ENCODE measurements at regions of chr16 and their contacts with region 1.

Region 1: DNA sequence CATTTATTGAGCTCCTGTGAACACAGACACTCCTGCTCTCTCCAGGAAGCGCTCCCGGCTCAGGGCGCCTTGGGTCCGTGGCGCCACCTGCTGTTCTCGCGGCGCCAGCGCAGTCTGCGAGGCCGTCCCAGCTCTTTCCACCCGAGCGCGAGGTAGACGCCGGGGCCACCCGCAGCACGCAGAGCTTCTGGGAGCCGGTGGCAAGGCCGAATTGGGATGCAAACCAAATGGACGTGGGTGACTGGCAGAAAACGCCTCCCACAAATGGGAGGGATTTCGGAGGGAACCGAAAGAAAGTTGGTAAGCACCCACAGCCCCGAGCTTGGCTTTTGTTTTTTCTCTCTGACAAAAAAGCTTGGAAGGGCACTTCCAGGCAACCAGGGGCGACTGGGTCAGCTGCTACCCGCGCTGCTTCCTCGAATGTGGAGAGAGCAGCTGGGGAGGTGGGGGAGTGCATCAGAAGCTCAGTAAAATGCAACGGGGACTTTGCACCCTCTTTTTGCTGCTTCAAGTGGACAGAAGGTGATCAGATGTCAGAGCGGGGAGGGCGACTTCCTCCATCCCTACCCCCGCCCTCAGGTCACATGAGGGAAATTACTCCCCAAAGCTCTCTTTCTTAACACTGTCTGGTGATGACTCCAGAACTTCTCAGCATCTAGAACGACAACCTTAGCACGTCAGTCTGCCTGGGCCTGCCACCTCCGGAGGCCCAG is 13.5 kb upstream of the N4BP1 start:
- H3K4me3 Mint-ChIP-seq: peak overlapping the region; percentile 95
- H3K27ac Mint-ChIP-seq: no peak overlapping the region
- H3K4me1 Mint-ChIP-seq: peaks cover 76% of the 10 kb centered on the region
- H3K27me3 Mint-ChIP-seq: no peaks in the 10 kb centered on the region

Region 2: DNA sequence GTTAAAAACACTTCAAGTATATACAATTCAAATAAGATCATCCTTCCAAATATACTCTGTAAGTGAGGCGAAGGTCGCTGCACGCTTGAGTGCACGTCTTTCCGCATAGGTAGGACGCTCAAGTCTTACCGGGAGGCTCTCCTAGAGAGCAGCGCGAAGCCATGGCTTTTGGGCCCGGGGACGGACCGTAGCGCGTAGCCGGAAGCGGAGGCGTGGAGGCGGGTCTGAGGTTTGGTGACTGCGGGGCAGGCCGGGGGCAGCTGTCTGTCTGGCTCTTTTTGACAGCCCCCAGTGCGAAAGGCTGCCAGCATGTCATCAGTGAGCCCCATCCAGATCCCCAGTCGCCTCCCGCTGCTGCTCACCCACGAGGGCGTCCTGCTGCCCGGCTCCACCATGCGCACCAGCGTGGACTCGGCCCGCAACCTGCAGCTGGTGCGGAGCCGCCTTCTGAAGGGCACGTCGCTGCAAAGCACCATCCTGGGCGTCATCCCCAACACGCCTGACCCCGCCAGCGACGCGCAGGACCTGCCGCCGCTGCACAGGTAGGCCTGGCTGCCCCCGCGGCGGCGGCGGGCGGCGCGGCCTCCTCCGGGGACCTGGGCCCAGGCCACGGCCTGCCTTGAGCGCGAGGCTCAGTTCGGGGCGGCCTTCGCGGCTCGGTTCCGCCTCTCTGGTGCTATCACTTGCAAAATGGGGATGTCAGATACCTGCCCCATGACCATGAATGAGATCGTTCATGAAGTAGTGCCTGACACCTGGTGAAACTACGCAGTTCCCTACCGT is 379.2 kb before region 1 on chr16 and contains the start of gene LONP2:
- intact Hi-C with region 1: loop called (anchors 2 kb)
- H3K4me3 Mint-ChIP-seq: peak within 1 kb of the TSS; percentile 99
- H3K27ac Mint-ChIP-seq: peak within 1 kb of the TSS; percentile 93
- H3K4me1 Mint-ChIP-seq: peaks cover 26% of the 10 kb centered on the region
- H3K27me3 Mint-ChIP-seq: no peaks in the 10 kb centered on the region

Region 3: DNA sequence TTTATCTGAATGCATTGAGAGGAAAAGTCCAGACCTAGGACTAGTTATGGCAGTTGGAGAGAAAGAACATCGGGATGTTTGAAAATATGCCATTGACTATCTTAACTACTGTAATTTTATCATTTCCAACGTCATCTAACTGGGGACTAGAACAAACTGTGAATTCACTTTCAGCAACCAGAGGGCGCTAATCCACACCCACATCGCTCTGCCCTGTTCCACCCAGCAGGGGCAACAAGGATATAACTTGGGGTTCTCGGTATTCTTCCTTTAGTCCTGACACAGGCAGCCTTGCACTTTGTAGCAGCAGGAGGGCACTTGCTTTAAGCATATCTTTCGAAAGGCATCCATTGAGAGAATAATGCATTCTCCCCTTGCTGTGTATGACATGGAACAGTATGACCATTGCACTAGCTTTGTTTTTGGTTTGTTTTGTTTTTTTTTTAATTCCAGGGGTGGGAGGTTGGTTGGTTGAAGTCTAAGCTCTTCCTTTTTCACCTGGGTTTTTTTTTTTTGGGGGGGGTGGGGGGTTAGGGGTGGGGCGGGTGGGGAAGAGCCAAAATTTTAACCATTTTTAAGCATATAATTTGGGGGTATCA is 269.8 kb before region 1 on chr16:
- intact Hi-C with region 1: loop called (anchors 2 kb)
- H3K4me3 Mint-ChIP-seq: no peak overlapping the region
- H3K27ac Mint-ChIP-seq: peak overlapping the region; percentile 59
- H3K4me1 Mint-ChIP-seq: peaks cover 30% of the 10 kb centered on the region
- H3K27me3 Mint-ChIP-seq: no peaks in the 10 kb centered on the region

Region 4: GRCh38 chr16:48556913-48557351 is 66.5 kb before region 1 on chr16:
- intact Hi-C with region 1: loop called (anchors 2 kb)
- H3K4me3 Mint-ChIP-seq: peak overlapping the region; percentile 9
- H3K27ac Mint-ChIP-seq: peak overlapping the region; percentile 66
- H3K4me1 Mint-ChIP-seq: peaks cover 86% of the 10 kb centered on the region
- H3K27me3 Mint-ChIP-seq: no peaks in the 10 kb centered on the region

Region 5: GRCh38 chr16:48609652-48610029 is 13.8 kb before region 1 on chr16:
- intact Hi-C with region 1: loop called (anchors 1 kb)
- H3K4me3 Mint-ChIP-seq: no peak overlapping the region
- H3K27ac Mint-ChIP-seq: no peak overlapping the region
- H3K4me1 Mint-ChIP-seq: peaks cover 50% of the 10 kb centered on the region
- H3K27me3 Mint-ChIP-seq: no peaks in the 10 kb centered on the region

Region 6: DNA sequence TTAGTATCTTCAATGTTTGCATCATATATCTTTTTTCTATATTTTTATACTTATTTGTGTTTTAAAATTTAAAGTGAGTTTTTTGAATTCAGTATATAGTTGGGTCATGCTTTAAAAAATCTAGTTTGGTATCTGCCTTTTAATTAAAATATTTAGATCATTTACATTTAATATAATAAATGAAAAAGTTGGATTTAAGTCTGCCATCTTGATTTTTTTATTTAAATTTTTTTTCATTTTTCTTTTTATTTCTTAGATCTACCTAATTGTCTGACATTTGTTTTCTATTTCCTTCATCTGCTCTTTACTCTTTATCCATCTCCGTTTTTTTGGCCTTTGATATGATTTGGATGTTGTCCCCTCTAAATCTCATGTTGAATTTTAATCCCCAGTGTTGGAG is 36.5 kb after region 1 on chr16:
- intact Hi-C with region 1: no loop called
- H3K4me3 Mint-ChIP-seq: no peak overlapping the region
- H3K27ac Mint-ChIP-seq: no peak overlapping the region
- H3K4me1 Mint-ChIP-seq: no peaks in the 10 kb centered on the region
- H3K27me3 Mint-ChIP-seq: peaks cover 7% of the 10 kb centered on the region

Region 7: GRCh38 chr16:48949636-48950035 is 326.2 kb after region 1 on chr16:
- intact Hi-C with region 1: no loop called
- H3K4me3 Mint-ChIP-seq: no peak overlapping the region
- H3K27ac Mint-ChIP-seq: no peak overlapping the region
- H3K4me1 Mint-ChIP-seq: no peaks in the 10 kb centered on the region
- H3K27me3 Mint-ChIP-seq: no peaks in the 10 kb centered on the region